ENCODE measurements at regions of chr9 and their contacts with region 1.

Region 1: DNA sequence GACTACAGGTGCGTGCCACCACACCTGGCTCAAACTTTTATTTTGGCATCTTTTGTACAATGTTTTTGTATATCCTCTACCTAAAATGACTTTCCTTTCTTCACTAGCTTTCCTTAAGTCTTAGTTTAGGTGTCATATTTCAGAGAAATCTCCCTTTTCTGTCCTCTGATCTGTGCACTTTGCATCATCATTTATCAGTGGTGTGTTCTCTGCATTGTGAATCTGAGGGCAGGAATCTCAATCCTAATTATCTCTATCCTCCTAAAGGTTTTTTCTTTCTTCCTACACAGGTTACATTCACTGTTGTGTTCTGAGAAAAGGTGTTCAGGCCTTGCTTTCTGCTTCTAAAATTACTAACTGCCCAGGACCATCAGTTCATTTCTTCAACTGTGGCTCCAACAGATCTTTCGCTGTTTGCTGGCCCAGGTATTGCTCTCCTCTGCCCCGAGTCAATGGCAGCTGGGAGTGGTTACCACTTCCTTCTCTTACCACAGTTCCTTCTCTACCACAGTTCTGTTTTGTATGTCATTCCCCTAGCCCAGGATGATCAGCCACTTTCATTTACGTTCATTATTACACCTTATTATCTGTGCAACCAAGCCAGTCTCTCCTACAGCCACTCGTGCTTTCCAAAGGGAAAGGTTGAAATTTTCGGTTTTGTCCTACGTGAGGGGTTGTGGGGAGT is 14.0 kb downstream of the TGFBR1 start:
- DNase-seq: peak; percentile 76
- ATAC-seq: peak; percentile 95
- H3K4me3 ChIP-seq: peak overlapping the region; percentile 15; the same call in 1 of the 2 replicates
- H3K27ac ChIP-seq: peak overlapping the region; percentile 68
- H3K4me1 ChIP-seq: peaks cover 19% of the 10 kb centered on the region
- H3K27me3 ChIP-seq: no peaks in the 10 kb centered on the region
- CTCF ChIP-seq: no peak
- EP300 ChIP-seq: peak; percentile 75 to 93; a peak in 3 of 4 replicates
- POLR2A ChIP-seq: no peak
- RAD21 ChIP-seq: no peak

Region 2: GRCh38 chr9:99057665-99058625 is 61.0 kb before region 1 on chr9:
- CTCF ChIA-PET with region 1: interaction called, 4 read pairs
- POLR2A ChIA-PET with region 1: no interaction called
- RAD21 ChIA-PET with region 1: interaction called, 3 read pairs
- SMC1A ChIA-PET with region 1: interaction called, 10 read pairs
- in situ Hi-C with region 1: no loop called
- intact Hi-C with region 1: no loop called
- DNase-seq: peak; percentile 64
- ATAC-seq: peak; percentile 88
- H3K4me3 ChIP-seq: peak overlapping the region; percentile 25; the same call in 1 of the 2 replicates
- H3K27ac ChIP-seq: peak overlapping the region; percentile 15; the same call in 1 of the 2 replicates
- H3K4me1 ChIP-seq: peaks cover 27% of the 10 kb centered on the region
- H3K27me3 ChIP-seq: no peaks in the 10 kb centered on the region
- CTCF ChIP-seq: no peak
- EP300 ChIP-seq: no peak
- POLR2A ChIP-seq: no peak
- RAD21 ChIP-seq: no peak

Measured in GM12878 (cell line).